T-cell (primary cell): ENCODE measurements at regions of chr5 and their contacts with region 1.

Region 1: DNA sequence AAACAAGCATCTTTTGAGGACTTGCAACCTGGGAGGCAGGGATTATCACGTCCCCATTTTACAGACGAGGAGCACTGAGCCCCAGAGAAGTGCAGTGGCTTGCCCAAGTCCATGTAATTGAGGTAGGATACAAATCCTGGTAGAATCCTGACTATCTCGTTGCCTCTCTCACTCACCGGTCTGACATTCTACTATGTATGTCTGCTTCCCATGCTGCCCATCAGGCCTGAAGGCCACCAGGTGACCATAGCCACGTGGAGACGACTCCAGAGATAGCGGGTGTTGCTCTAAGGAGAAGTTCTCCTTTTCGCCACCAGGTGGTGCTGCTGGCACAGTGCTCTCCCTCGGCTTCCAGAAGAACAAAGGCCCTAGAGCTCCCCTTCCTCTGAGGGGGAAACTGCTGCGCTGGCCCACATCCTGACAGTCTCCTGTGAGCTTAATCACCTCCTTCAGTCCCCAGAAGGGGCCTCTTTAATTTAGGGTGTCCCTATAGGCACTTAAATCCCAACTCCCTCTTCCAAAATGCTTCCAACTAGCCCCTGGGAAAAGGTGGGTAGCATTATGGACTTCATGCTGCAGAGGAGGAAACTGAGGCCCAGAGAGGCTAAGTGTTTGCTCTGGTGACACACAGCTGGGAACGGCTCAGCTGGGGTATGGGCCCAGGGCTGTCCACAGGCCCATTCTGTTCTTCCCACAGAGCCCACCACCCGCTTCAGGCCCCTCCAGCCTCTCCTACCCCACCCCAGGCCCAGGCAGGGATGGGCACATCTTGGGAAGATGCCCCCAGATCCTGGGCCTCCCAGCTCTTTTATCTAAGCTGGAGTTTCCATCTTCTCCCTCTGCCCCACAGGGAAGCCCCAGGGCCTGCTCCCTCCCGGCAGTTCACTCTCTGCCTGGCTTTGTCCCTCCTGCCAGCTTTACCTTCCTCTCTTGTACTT is 6.4 kb downstream of the SLC34A1 start:
- DNase-seq: peak; percentile 77 to 96 (median 84)
- ATAC-seq: peak; percentile 74 to 85 (median 80)
- H3K4me3 ChIP-seq: no peak overlapping the region
- H3K4me3 Mint-ChIP-seq: peak overlapping the region; percentile 25 to 58 (median 46)
- H3K27ac ChIP-seq: peak overlapping the region; percentile 89
- H3K27ac Mint-ChIP-seq: peak overlapping the region; percentile 89 to 91
- H3K4me1 ChIP-seq: peaks cover 19 to 54% of the 10 kb centered on the region in 2 experiments
- H3K4me1 Mint-ChIP-seq: peaks cover 37 to 40% (median 38%) of the 10 kb centered on the region in 3 donors
- H3K27me3 ChIP-seq: no peaks in the 10 kb centered on the region
- H3K27me3 Mint-ChIP-seq: no peaks in the 10 kb centered on the region

Region 2: DNA sequence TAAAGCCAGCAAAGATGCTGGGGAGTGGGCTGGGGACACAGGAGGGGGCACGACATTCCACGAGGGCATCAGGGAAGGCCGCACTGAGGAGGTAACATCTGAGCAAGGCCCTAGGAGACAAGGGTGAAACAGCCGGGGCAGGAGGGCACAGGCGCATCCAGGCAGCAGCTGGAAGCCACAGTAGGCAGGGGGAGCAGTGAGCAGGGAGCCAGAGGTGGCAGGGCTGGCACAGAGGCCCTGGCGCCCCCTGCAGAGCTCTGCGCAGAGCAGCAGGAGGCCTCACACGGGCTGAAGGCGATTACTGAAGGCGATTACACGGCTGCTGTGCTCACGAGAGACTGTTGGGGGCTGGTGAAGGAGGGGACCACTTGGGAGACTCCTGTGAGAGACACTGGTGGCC is 54.5 kb before region 1 on chr5:
- CTCF ChIA-PET with region 1: no interaction called
- POLR2A ChIA-PET with region 1: no interaction called
- DNase-seq: peak in 1 of 35 experiments; percentile 32
- ATAC-seq: peak in 3 of 4 experiments; percentile 41 to 62 (median 53)
- H3K4me3 ChIP-seq: no peak overlapping the region
- H3K4me3 Mint-ChIP-seq: no peak overlapping the region
- H3K27ac ChIP-seq: no peak overlapping the region
- H3K27ac Mint-ChIP-seq: no peak overlapping the region
- H3K4me1 ChIP-seq: peaks cover 0 to 25% of the 10 kb centered on the region in 2 experiments
- H3K4me1 Mint-ChIP-seq: peaks cover 10 to 20% (median 17%) of the 10 kb centered on the region in 3 donors
- H3K27me3 ChIP-seq: no peaks in the 10 kb centered on the region
- H3K27me3 Mint-ChIP-seq: no peaks in the 10 kb centered on the region

Region 3: GRCh38 chr5:177370488-177371119 is 20.0 kb before region 1 on chr5:
- CTCF ChIA-PET with region 1: interaction called, 3 to 23 read pairs
- POLR2A ChIA-PET with region 1: no interaction called
- DNase-seq: peak in 26 of 35 experiments; percentile 32 to 78 (median 58)
- ATAC-seq: peak; percentile 14 to 84 (median 76)
- H3K4me3 ChIP-seq: peak overlapping the region in 1 of 2 donors; percentile 50
- H3K4me3 Mint-ChIP-seq: peak overlapping the region in 2 of 3 donors; percentile 49 to 74
- H3K27ac ChIP-seq: peak overlapping the region; percentile 63
- H3K27ac Mint-ChIP-seq: peak overlapping the region; percentile 89 to 90
- H3K4me1 ChIP-seq: peaks cover 33 to 89% of the 10 kb centered on the region in 2 experiments
- H3K4me1 Mint-ChIP-seq: peaks cover 62 to 73% (median 67%) of the 10 kb centered on the region in 3 donors
- H3K27me3 ChIP-seq: no peaks in the 10 kb centered on the region
- H3K27me3 Mint-ChIP-seq: no peaks in the 10 kb centered on the region

Region 4: GRCh38 chr5:177425801-177426565 is 35.4 kb after region 1 on chr5:
- CTCF ChIA-PET with region 1: interaction called, 4 to 23 read pairs
- POLR2A ChIA-PET with region 1: interaction called in 1 of 2 experiments, 8 read pairs
- DNase-seq: peak; percentile 98 to 100 (median 100)
- ATAC-seq: peak; percentile 80 to 82 (median 80)
- H3K4me3 ChIP-seq: peak overlapping the region; percentile 71 to 77
- H3K4me3 Mint-ChIP-seq: peak overlapping the region; percentile 79 to 92 (median 90)
- H3K27ac ChIP-seq: peak overlapping the region; percentile 87
- H3K27ac Mint-ChIP-seq: peak overlapping the region; percentile 99
- H3K4me1 ChIP-seq: peaks cover 32 to 61% of the 10 kb centered on the region in 2 experiments
- H3K4me1 Mint-ChIP-seq: peaks cover 49 to 56% (median 53%) of the 10 kb centered on the region in 3 donors
- H3K27me3 ChIP-seq: no peaks in the 10 kb centered on the region
- H3K27me3 Mint-ChIP-seq: no peaks in the 10 kb centered on the region

Region 5: GRCh38 chr5:177446200-177447065 is 55.8 kb after region 1 on chr5 and contains the start of gene PRR7:
- CTCF ChIA-PET with region 1: interaction called in 1 of 2 experiments, 20 read pairs
- POLR2A ChIA-PET with region 1: interaction called in 1 of 2 experiments, 5 read pairs
- DNase-seq: peak; percentile 48 to 90 (median 72)
- ATAC-seq: peak; percentile 48 to 66 (median 64)
- H3K4me3 ChIP-seq: peak within 1 kb of the TSS; percentile 52 to 55
- H3K4me3 Mint-ChIP-seq: peak within 1 kb of the TSS; percentile 72 to 78 (median 72)
- H3K27ac ChIP-seq: peak within 1 kb of the TSS; percentile 87
- H3K27ac Mint-ChIP-seq: peak within 1 kb of the TSS; percentile 95
- H3K4me1 ChIP-seq: peaks cover 19 to 74% of the 10 kb centered on the region in 2 experiments
- H3K4me1 Mint-ChIP-seq: peaks cover 47 to 58% (median 53%) of the 10 kb centered on the region in 3 donors
- H3K27me3 ChIP-seq: peaks cover 0 to 2% of the 10 kb centered on the region in 2 experiments
- H3K27me3 Mint-ChIP-seq: no peaks in the 10 kb centered on the region
- total RNA-seq, gene PRR7: 9.5 to 28.2 (median 12.3) TPM

Region 6: DNA sequence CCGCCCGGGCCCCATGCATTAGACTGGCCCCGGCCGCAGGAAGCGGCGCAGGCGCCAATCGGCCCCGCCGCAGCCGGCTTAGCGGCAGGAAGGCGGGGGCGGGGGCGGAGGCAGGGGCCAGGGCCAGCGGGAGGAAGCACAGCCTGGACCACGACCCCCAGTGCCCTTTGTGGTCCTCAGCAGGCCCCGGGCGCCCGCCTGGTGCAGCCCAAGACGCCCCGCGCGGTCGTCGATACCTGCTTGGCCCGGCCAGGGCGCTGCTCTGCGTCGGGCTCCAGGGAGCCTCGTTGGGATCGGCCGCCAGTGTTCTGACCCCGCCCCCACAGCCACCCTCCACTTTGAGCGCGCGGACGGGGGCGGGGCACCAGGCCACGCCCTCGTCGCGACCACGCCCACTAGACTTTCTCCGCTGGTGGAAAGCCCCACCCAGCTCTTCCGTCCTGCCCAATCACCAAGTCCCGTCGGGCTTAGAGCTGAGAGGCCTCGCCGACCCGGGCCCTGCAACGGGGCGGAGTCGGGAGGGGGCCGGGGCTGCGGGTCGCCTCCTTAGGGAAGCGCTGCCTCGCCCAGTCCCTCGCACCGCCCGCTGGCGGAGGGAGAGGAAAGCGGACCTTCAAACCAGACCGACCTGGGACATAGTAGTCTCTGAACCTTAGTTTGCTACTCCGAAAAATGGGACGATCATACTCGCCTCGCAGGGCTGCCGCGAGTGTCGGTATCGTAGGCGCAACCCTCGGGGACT is 106.8 kb after region 1 on chr5 and contains the start of gene PDLIM7:
- CTCF ChIA-PET with region 1: interaction called, 3 to 13 read pairs
- POLR2A ChIA-PET with region 1: no interaction called
- DNase-seq: peak; percentile 82 to 97 (median 89)
- ATAC-seq: peak; percentile 87 to 92 (median 90)
- H3K4me3 ChIP-seq: peak within 1 kb of the TSS; percentile 61 to 62
- H3K4me3 Mint-ChIP-seq: peak within 1 kb of the TSS; percentile 78 to 84 (median 84)
- H3K27ac ChIP-seq: no peak within 1 kb of the TSS
- H3K27ac Mint-ChIP-seq: no peak within 1 kb of the TSS
- H3K4me1 ChIP-seq: peaks cover 0 to 47% of the 10 kb centered on the region in 2 experiments
- H3K4me1 Mint-ChIP-seq: peaks cover 23 to 34% (median 25%) of the 10 kb centered on the region in 3 donors
- H3K27me3 ChIP-seq: peaks cover 0 to 6% of the 10 kb centered on the region in 2 experiments
- H3K27me3 Mint-ChIP-seq: no peaks in the 10 kb centered on the region
- total RNA-seq, gene PDLIM7: 9.8 to 17.8 (median 12.8) TPM

Region 7: DNA sequence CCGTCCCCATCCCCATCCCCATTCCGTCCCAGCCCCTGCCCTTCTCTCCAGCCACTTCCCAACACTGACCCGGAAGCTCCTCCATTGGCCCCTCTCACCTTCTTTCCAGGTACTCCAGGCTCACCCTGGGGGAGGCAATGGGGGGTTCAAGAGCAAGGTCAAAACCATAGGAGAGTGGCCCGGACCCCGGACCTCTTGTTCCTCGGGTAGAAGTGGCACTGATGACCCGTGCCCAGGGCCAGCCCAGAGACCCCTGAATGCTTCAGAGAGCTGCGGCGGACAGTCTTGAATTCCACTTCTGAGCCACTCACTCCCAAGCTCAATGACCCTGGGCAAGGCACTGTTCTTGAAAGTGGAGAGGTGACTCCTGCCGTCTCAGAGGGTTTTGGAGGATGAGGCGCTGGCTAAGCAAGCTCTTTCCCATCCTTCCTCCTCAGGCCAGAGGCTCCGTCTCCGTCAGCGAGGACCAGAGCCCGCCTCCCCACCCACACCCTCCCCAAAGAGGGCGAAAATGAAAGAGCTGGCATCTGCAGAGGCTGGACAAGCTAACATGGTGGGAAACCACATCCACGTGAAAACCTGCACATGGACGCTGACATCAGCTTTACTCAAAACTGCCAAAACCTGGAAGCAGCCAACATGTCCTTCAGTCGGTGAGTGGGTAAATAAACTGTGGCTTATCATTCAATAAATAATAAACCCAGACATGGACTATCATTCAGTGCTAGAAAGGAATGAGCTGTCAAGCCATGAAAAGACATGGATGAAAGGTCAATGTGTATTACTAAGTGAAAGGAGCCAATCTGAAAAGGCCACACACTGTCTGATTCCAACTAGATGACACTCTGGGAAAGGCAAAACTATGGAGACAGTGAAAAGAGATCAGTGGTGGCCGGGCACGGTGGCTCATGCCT is 869.2 kb after region 1 on chr5:
- CTCF ChIA-PET with region 1: no interaction called
- POLR2A ChIA-PET with region 1: no interaction called
- DNase-seq: no peak
- ATAC-seq: no peak
- H3K4me3 ChIP-seq: no peak overlapping the region
- H3K4me3 Mint-ChIP-seq: no peak overlapping the region
- H3K27ac ChIP-seq: no peak overlapping the region
- H3K27ac Mint-ChIP-seq: no peak overlapping the region
- H3K4me1 ChIP-seq: no peaks in the 10 kb centered on the region
- H3K4me1 Mint-ChIP-seq: no peaks in the 10 kb centered on the region
- H3K27me3 ChIP-seq: peaks cover 0 to 8% of the 10 kb centered on the region in 2 experiments
- H3K27me3 Mint-ChIP-seq: no peaks in the 10 kb centered on the region